ENCODE measurements at regions of chr1 and their contacts with region 1.

Region 1: DNA sequence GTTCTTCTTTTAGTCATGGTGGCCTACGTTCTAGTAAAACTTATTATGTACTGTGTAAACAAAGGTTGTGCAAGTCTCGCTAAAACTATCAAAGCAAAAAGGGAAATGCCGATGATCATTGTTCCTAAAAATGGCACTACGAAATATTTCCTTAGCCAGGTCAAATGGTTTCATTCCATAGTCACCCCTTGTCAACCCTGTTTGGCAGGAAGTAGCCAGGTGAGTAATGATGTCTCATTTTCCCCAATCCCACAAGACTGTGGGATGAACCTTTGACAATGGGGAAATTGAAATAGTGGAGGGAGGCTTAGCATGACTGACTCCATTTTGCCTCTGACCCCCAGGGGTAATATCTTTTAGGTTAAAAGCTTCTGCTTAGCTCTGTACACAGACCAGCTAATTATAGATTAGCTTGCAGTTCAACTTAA is 5.6 kb upstream of the REN start:
- DNase-seq: peak; percentile 89
- H3K4me3 Mint-ChIP-seq: no peak overlapping the region
- H3K27ac Mint-ChIP-seq: no peak overlapping the region
- H3K4me1 Mint-ChIP-seq: peaks cover 7% of the 10 kb centered on the region
- H3K27me3 Mint-ChIP-seq: no peaks in the 10 kb centered on the region
- CTCF ChIP-seq: no peak

Region 2: GRCh38 chr1:204198151-204198994 is 26.6 kb after region 1 on chr1:
- CTCF ChIA-PET with region 1: interaction called, 505 read pairs
- POLR2A ChIA-PET with region 1: interaction called, 5 read pairs
- intact Hi-C with region 1: no loop called
- DNase-seq: peak; percentile 83
- H3K4me3 Mint-ChIP-seq: no peak overlapping the region
- H3K27ac Mint-ChIP-seq: no peak overlapping the region
- H3K4me1 Mint-ChIP-seq: peaks cover 6% of the 10 kb centered on the region
- H3K27me3 Mint-ChIP-seq: peaks cover 18% of the 10 kb centered on the region
- CTCF ChIP-seq: peak; percentile 37

Measured in MCF 10A (cell line).